Calu3 (cell line): ENCODE measurements at regions of chr18 and their contacts with region 1.

Region 1: DNA sequence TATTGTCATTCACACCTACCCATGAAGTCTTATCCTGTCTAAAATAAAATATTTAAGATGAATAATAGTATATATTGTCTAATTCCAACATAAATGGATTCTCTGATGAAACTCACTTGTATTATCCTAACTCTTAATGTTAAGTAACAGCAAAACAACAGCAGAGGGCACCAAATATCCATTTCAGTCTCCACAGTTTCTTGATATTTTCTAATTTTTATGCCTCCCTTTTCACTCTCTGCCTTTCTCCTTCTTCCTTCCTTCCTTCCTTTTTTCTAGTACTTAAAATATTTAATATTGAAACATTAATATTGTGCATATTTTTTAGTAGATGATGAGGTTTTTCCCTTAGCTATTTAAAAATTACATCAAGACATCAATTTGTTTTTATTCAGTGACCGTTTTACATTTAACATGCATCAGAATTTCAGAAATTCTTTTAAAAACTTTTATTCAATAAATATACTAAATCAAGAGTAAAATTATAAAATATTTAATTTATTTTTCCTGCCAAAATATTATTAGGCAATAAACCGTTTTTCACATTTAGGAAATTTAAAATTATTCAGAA is 97.6 kb downstream of the WDR7 start:
- DNase-seq: peak; percentile 23
- H3K4me3 Mint-ChIP-seq: no peak overlapping the region
- H3K27ac Mint-ChIP-seq: no peak overlapping the region
- H3K4me1 Mint-ChIP-seq: no peaks in the 10 kb centered on the region
- H3K27me3 Mint-ChIP-seq: no peaks in the 10 kb centered on the region
- CTCF ChIP-seq: no peak

Region 2: DNA sequence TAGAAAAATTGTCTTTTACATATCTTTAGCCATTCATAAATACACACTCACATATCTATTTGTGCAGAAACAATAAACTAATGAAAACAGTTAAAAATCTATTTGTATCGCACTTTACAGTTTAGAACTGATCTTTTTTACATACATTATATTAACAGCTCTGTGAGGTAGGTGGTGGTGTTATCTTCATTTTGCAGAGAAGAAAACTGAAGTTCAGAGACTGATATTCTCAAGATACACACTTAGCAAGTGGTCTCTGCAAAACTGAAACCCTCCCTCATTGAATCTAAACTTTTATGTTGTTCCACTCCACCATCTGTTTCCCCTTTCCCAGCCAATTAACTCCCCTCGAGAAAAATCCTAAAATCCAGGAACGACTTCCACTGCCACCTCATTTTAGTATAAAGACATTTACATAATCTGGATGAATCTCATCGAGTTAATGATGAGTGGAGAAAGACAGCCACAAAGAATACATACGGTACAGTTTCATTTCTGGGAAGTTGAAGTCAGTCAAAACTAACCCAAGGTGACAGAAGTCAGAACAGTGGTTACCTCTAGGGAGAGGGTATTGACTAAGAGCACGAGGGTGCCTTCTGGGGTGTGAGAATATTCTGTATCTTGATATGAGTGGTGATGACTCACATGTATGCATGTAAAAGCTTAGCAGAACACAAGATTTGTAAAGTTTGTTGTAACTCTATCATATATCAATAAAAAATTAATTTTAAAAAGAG is 636.6 kb before region 1 on chr18:
- CTCF ChIA-PET with region 1: no interaction called
- intact Hi-C with region 1: no loop called
- DNase-seq: no peak
- H3K4me3 Mint-ChIP-seq: no peak overlapping the region
- H3K27ac Mint-ChIP-seq: no peak overlapping the region
- H3K4me1 Mint-ChIP-seq: no peaks in the 10 kb centered on the region
- H3K27me3 Mint-ChIP-seq: no peaks in the 10 kb centered on the region
- CTCF ChIP-seq: no peak

Region 3: GRCh38 chr18:56861244-56861643 is 112.5 kb after region 1 on chr18:
- CTCF ChIA-PET with region 1: no interaction called
- intact Hi-C with region 1: loop called (anchors 5 kb)
- DNase-seq: peak; percentile 41
- H3K4me3 Mint-ChIP-seq: peak overlapping the region; percentile 37
- H3K27ac Mint-ChIP-seq: peak overlapping the region; percentile 33
- H3K4me1 Mint-ChIP-seq: peaks cover 17% of the 10 kb centered on the region
- H3K27me3 Mint-ChIP-seq: no peaks in the 10 kb centered on the region
- CTCF ChIP-seq: no peak

Region 4: GRCh38 chr18:57561728-57562423 is 813.1 kb after region 1 on chr18:
- CTCF ChIA-PET with region 1: no interaction called
- intact Hi-C with region 1: loop called (anchors 2 kb)
- DNase-seq: peak; percentile 44
- H3K4me3 Mint-ChIP-seq: no peak overlapping the region
- H3K27ac Mint-ChIP-seq: no peak overlapping the region
- H3K4me1 Mint-ChIP-seq: peaks cover 7% of the 10 kb centered on the region
- H3K27me3 Mint-ChIP-seq: no peaks in the 10 kb centered on the region
- CTCF ChIP-seq: peak; percentile 91